Psoas muscle (tissue), 8 donors: ENCODE measurements at regions of chr14 and their contacts with region 1.

Region 1: DNA sequence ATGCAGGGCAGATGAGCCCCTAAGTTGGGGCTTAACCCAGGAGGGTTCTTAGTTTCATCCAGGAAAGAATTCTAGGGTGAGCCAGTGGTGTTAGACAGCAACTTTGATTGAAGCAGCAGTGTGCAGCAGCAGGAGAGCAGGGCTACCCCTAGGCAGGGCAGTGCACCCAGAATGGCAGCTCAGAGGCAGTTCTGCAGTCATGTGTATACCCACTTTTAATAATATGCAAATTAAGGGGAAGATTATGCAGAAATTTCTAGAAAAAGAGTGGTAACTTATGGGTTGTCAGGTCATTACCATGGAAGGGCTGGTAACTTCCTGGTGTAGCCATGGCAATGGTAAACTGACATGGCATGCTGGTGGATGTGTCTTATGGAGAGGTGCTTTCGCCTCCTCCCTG is 297.5 kb downstream of the PCNX1 start:
- DNase-seq: no peak
- ATAC-seq: no peak
- H3K4me3 ChIP-seq: no peak overlapping the region
- H3K27ac ChIP-seq: no peak overlapping the region
- H3K4me1 ChIP-seq: no peaks in the 10 kb centered on the region
- H3K27me3 ChIP-seq: peaks cover 0 to 1% (median 0%) of the 10 kb centered on the region in 3 donors
- CTCF ChIP-seq: no peak

Region 2: GRCh38 chr14:70655110-70655826 is 549.5 kb before region 1 on chr14:
- intact Hi-C with region 1: no loop called
- DNase-seq: no peak
- ATAC-seq: no peak
- H3K4me3 ChIP-seq: no peak overlapping the region
- H3K27ac ChIP-seq: no peak overlapping the region
- H3K4me1 ChIP-seq: no peaks in the 10 kb centered on the region
- H3K27me3 ChIP-seq: peaks cover 0 to 6% (median 0%) of the 10 kb centered on the region in 3 donors
- CTCF ChIP-seq: no peak

Region 3: DNA sequence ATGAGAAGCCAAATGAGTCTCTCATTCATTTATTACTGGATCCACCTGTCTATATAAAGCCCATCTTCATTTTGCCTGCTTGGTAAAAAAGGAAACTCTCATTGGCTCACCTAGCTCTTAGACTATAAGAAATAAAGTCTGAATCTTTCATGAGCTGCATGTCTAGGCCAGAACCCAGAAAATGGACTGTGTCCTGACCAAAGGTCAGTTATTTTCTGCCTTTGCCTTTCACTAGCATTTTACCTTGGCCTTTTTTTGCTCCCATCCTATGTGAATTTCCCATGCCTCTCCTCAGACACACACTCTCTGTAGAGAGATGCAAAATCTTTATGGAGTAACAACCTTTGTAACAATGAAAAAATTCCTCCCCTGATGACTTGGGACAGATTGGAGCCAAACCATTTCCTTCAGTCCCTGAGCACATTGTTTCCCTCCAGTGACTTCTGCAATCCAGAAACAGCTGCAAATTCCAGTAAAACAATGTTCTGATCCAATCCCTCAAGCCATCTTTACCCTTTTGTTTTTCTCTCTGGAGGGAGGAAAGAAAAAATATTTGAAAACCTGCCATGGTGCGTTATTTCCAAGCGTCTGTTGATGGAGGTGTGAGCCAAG is 361.8 kb before region 1 on chr14:
- intact Hi-C with region 1: no loop called
- DNase-seq: no peak
- ATAC-seq: no peak
- H3K4me3 ChIP-seq: no peak overlapping the region
- H3K27ac ChIP-seq: no peak overlapping the region
- H3K4me1 ChIP-seq: no peaks in the 10 kb centered on the region
- H3K27me3 ChIP-seq: peaks cover 0 to 2% (median 0%) of the 10 kb centered on the region in 3 donors
- CTCF ChIP-seq: no peak

Region 4: GRCh38 chr14:71175450-71175849 is 29.3 kb before region 1 on chr14:
- intact Hi-C with region 1: loop called in 1 of 2 experiments (anchors 1 kb)
- DNase-seq: no peak
- ATAC-seq: no peak
- H3K4me3 ChIP-seq: no peak overlapping the region
- H3K27ac ChIP-seq: no peak overlapping the region
- H3K4me1 ChIP-seq: no peaks in the 10 kb centered on the region
- H3K27me3 ChIP-seq: peaks cover 0 to 1% (median 0%) of the 10 kb centered on the region in 3 donors
- CTCF ChIP-seq: no peak